Activated naive CD4-positive, alpha-beta T cell treated with anti-CD3 and anti-CD28 coated beads, Interleukin-2, amount 10 ng/mL, durations not matched to agents 7 days and 5 days (primary cell): ENCODE measurements at regions of chr16 and their contacts with region 1.

Region 1: DNA sequence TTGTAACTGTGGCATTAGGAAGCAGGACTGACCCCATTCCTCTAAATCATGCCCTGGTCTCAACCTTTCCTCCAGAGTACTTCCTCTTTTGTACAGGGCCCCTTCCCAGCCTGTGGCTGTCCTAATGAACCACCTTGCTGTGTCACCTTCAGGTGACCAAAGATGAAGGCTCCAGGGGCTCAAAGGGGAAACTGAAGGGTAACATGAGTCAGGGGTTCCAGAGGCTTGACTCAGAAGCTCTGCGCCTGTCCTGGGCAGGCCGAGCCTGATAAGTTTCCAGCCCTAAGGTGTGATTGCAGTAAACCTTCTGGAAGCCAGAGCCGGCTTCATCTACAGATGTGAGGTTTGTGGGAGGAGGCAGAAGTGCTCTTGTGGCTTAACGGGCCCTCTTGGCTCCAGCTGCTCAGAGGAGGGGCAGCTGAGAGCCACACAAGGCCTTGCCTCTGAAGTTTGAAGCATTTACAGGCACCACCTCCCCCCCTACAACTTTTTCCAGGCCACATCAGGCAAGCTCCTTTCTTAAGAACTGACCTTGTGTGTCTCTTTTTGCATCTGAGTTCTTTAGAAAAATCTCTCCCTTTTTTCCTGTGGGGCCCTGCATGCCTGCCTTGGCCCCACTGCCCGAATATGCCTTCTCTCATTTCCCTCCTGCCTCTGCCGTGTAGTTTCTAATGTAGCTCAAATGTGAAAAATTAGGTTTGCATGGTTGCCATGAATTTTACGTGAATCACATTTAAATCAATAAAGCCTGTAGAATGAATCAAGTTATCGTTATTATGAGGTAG is 149.9 kb downstream of the CLEC16A start:
- DNase-seq: peak; percentile 69
- H3K4me3 Mint-ChIP-seq: peak overlapping the region; percentile 9
- H3K27ac Mint-ChIP-seq: peak overlapping the region; percentile 92
- H3K4me1 Mint-ChIP-seq: peaks cover 80% of the 10 kb centered on the region
- H3K27me3 Mint-ChIP-seq: no peaks in the 10 kb centered on the region

Region 2: GRCh38 chr16:11051879-11052808 is 42.1 kb before region 1 on chr16:
- CTCF ChIA-PET with region 1: interaction called, 11 read pairs
- DNase-seq: peak; percentile 86
- H3K4me3 Mint-ChIP-seq: peak overlapping the region; percentile 39
- H3K27ac Mint-ChIP-seq: peak overlapping the region; percentile 90
- H3K4me1 Mint-ChIP-seq: peaks cover 90% of the 10 kb centered on the region
- H3K27me3 Mint-ChIP-seq: no peaks in the 10 kb centered on the region

Region 3: DNA sequence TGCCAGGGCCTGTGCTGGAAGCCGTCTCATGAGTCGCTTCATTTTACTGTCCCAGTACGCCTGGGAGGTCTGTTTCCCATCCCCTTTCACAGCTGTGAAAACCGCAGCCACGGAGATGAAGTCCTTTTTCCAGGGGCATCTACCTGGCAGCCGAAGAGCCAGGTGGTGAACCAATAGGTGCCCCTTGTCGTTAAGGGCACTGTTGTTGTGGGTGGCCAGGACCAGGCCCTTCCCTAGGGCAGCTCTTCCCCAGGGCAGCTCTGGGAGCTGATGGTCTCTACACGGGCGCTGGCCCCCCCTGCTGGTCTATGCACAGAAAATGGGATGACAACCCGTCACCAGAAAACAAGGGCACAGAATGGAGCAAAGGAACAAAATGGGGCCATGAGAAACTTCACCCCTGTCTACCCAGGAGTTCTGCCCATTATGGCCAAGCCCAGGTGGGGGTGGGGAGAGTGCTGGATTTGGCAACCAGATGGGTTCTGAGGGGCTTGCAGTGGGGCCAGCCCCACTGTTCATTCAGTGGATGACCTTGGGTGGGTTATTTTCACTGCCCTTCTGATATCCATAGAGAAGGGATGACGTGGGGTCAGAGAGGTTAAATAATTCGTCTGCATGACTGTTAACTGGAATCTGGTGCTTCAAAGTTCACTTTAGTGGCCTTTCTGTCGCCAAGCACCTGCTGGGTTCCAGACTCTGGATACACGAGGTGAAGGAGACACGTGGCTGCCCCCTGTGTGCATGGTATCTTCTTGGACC is 262.5 kb after region 1 on chr16:
- CTCF ChIA-PET with region 1: no interaction called
- DNase-seq: peak; percentile 73
- H3K4me3 Mint-ChIP-seq: peak overlapping the region; percentile 62
- H3K27ac Mint-ChIP-seq: peak overlapping the region; percentile 96
- H3K4me1 Mint-ChIP-seq: peaks cover 91% of the 10 kb centered on the region
- H3K27me3 Mint-ChIP-seq: peaks cover 47% of the 10 kb centered on the region